ENCODE measurements at regions of chr13 and their contacts with region 1.

Region 1: DNA sequence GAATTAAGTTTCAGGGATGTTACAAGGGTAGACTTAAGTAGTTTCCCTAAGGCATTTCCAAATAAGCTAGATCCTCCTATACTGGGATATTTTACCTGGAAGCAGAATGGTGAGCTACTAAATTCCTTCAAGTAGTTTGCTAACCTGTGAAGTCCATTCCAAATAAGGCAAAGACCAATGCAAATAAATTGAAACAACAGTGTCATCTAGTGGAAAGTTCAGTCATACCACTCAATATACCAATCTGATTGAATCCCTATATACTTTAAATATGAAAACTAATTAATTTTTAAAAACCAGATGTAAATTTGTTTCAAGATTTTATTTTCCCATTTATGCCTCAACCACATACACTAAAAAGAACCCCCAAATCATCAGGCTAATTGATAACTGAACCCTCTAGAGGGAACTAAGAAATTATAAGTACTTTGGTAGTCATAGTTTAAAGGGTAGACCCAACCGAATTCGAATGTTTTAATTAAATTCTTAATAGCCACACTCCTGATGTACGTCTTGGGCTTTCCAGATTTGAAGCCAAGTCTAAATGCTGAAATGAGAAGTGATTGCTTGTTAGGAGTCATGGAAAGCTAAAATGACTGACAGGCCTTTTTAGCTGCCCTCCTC is 223.7 kb downstream of the TBC1D4 start:
- DNase-seq: peak in 2 of 4 experiments; percentile 7 to 24
- ATAC-seq: peak; percentile 81
- H3K4me3 ChIP-seq: no peak overlapping the region
- H3K27ac ChIP-seq: no peak overlapping the region
- H3K4me1 ChIP-seq: no peaks in the 10 kb centered on the region
- H3K27me3 ChIP-seq: no peaks in the 10 kb centered on the region
- CTCF ChIP-seq: peak; percentile 26 to 67 (median 37); a peak in 4 of 6 replicates
- EP300 ChIP-seq: no peak
- POLR2A ChIP-seq: no peak
- RAD21 ChIP-seq: peak; percentile 53 to 73

Region 2: DNA sequence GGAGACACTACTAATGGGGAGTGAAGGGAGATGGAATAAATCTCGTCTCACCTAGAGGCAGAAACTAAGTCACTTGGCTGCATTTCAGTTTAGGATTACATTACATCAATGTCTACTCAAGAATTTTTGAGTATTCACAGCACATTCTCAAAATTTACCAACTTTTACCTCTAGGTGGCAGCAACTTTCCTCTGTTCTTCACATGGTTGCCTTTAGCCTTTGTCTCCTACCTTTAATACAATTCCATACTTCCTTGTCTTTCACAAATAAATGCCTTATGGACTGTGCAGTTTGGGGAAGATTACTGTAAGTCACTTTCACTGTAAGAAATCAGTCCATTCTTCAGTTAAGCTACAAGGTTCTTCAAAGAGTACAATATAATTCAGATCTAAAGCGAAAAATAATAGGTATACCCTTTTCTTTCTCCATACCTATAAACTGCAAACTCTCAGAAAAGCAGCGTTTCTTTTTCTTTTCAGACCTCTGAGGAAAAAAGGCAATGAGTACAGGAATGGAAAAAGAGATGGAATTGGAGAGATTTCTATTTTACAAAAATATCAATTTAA is 1503.5 kb before region 1 on chr13:
- CTCF ChIA-PET with region 1: no interaction called
- POLR2A ChIA-PET with region 1: no interaction called
- in situ Hi-C with region 1: no loop called
- intact Hi-C with region 1: loop called (anchors 1 kb)
- DNase-seq: peak; percentile 12 to 29 (median 13)
- ATAC-seq: peak; percentile 74
- H3K4me3 ChIP-seq: no peak overlapping the region
- H3K27ac ChIP-seq: no peak overlapping the region
- H3K4me1 ChIP-seq: no peaks in the 10 kb centered on the region
- H3K27me3 ChIP-seq: no peaks in the 10 kb centered on the region
- CTCF ChIP-seq: peak; percentile 21 to 56 (median 54); a peak in 5 of 6 replicates
- EP300 ChIP-seq: no peak
- POLR2A ChIP-seq: no peak
- RAD21 ChIP-seq: peak; percentile 39 to 64

Region 3: DNA sequence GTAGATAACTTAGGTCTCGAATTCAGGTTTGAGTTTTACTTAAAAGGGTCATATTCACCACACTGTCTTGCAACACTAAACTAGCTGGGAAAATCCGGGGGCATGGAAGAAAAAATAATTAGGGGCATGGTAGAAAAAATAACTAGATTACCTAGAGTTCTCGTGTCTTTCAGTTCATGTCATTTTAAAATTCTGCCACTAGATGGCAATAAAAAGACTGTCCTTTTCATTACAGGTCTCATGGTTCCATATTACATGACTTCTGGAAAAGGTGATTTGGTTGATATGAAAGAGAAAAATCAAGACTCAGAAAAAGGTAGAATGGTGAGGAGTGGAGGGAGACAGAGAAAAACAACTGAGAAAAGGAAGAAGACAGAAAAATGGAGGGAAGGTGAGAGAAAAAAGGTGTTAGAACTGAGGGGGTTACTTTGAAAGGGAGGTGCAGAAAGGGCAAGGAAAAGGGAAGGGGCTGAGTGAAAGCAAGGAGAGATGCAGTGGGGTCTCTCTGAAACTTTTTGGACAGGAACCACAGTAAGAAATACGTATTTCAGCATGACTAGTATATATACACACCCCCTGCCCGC is 1423.0 kb before region 1 on chr13:
- CTCF ChIA-PET with region 1: no interaction called
- POLR2A ChIA-PET with region 1: no interaction called
- in situ Hi-C with region 1: no loop called
- intact Hi-C with region 1: loop called (anchors 5 kb)
- DNase-seq: peak; percentile 20 to 31 (median 24)
- ATAC-seq: no peak
- H3K4me3 ChIP-seq: no peak overlapping the region
- H3K27ac ChIP-seq: no peak overlapping the region
- H3K4me1 ChIP-seq: no peaks in the 10 kb centered on the region
- H3K27me3 ChIP-seq: no peaks in the 10 kb centered on the region
- CTCF ChIP-seq: peak in 2 of 3 experiments; percentile 9 to 45; a peak in 3 of 6 replicates
- EP300 ChIP-seq: no peak
- POLR2A ChIP-seq: no peak
- RAD21 ChIP-seq: peak; percentile 33 to 57

Region 4: GRCh38 chr13:75181906-75182305 is 76.4 kb before region 1 on chr13:
- CTCF ChIA-PET with region 1: no interaction called
- POLR2A ChIA-PET with region 1: no interaction called
- in situ Hi-C with region 1: no loop called
- intact Hi-C with region 1: no loop called
- DNase-seq: no peak
- ATAC-seq: no peak
- H3K4me3 ChIP-seq: no peak overlapping the region
- H3K27ac ChIP-seq: no peak overlapping the region
- H3K4me1 ChIP-seq: no peaks in the 10 kb centered on the region
- H3K27me3 ChIP-seq: no peaks in the 10 kb centered on the region
- CTCF ChIP-seq: no peak
- EP300 ChIP-seq: no peak
- POLR2A ChIP-seq: no peak
- RAD21 ChIP-seq: no peak

Region 5: GRCh38 chr13:75219479-75220237 is 38.6 kb before region 1 on chr13:
- CTCF ChIA-PET with region 1: no interaction called
- POLR2A ChIA-PET with region 1: no interaction called
- in situ Hi-C with region 1: no loop called
- intact Hi-C with region 1: no loop called
- DNase-seq: peak; percentile 70 to 76 (median 73)
- ATAC-seq: peak; percentile 100
- H3K4me3 ChIP-seq: no peak overlapping the region
- H3K27ac ChIP-seq: no peak overlapping the region
- H3K4me1 ChIP-seq: peaks cover 0 to 3% of the 10 kb centered on the region in 2 experiments; a peak in 2 of 5 replicates
- H3K27me3 ChIP-seq: no peaks in the 10 kb centered on the region
- CTCF ChIP-seq: peak; percentile 80 to 84 (median 81)
- EP300 ChIP-seq: no peak
- POLR2A ChIP-seq: no peak
- RAD21 ChIP-seq: peak; percentile 89 to 93

Measured in K562 (cell line).